Tibial artery (tissue), 4 donors: ENCODE measurements at regions of chr16 and their contacts with region 1.

Region 1: GRCh38 chr16:4944333-4945281 is 7.7 kb upstream of the PPL start:
- DNase-seq: peak; percentile 94 to 98
- H3K4me3 ChIP-seq: no peak overlapping the region
- H3K27ac ChIP-seq: peak overlapping the region; percentile 82 to 83
- H3K4me1 ChIP-seq: peaks cover 0 to 43% (median 39%) of the 10 kb centered on the region in 4 donors
- H3K27me3 ChIP-seq: no peaks in the 10 kb centered on the region
- CTCF ChIP-seq: no peak

Region 2: DNA sequence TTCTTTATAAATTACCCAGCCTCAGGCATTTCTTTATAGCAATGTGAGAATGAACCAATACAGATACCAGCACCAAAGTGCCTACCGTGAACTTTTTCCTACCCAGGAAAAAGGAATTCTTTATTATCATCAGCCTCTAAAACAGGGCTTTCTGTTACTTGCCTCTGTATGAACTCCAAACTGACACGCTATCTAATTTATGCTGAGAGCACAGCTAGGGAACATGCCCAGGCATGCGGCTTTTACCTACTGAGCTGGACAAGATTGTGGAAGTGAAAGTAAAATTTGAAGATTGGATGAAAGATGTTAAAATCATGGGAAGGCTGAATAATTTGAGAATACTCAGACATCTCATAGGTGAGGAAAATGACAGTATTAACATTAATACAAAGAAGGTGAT is 804.0 kb before region 1 on chr16:
- intact Hi-C with region 1: no loop called
- DNase-seq: no peak
- H3K4me3 ChIP-seq: no peak overlapping the region
- H3K27ac ChIP-seq: no peak overlapping the region
- H3K4me1 ChIP-seq: no peaks in the 10 kb centered on the region
- H3K27me3 ChIP-seq: no peaks in the 10 kb centered on the region
- CTCF ChIP-seq: no peak

Region 3: GRCh38 chr16:4624015-4624826 is 320.4 kb before region 1 on chr16 and contains the start of gene MGRN1:
- intact Hi-C with region 1: no loop called
- DNase-seq: peak; percentile 94 to 97
- H3K4me3 ChIP-seq: peak within 1 kb of the TSS; percentile 62 to 93
- H3K27ac ChIP-seq: peak within 1 kb of the TSS; percentile 83 to 90
- H3K4me1 ChIP-seq: peaks cover 0 to 34% (median 23%) of the 10 kb centered on the region in 4 donors
- H3K27me3 ChIP-seq: no peaks in the 10 kb centered on the region
- CTCF ChIP-seq: peak; percentile 81 to 83

Region 4: GRCh38 chr16:4746991-4747574 is 197.5 kb before region 1 on chr16:
- intact Hi-C with region 1: loop called (anchors 5 kb)
- DNase-seq: no peak
- H3K4me3 ChIP-seq: no peak overlapping the region
- H3K27ac ChIP-seq: no peak overlapping the region
- H3K4me1 ChIP-seq: peaks cover 0 to 15% (median 10%) of the 10 kb centered on the region in 4 donors
- H3K27me3 ChIP-seq: peaks cover 0 to 11% of the 10 kb centered on the region in 2 donors
- CTCF ChIP-seq: no peak

Region 5: DNA sequence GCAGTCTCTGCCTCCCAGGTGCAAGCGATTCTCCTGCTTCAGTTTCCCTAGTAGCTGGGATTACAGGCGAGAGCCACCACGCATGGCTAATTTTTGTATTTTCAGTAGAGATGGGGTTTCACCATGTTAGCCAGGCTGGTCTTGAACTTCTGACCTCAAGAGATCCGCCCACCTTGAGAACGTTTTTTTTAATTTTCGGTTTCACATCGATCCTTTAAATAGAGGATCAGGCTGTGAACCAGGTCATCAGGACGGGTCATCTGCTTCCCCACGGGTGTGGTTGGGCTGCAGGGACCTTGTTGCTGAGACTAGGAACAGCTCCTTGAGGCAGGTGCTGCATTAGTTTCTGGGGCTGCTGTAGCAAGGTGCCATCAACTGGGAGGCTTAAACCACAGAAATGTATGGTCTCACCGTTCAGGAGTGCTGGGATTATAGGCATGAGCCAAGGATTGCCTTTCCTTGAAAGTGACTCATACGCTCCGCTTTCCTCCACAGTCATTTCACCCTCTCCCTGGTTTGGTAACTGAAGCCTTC is 97.1 kb after region 1 on chr16:
- intact Hi-C with region 1: no loop called
- DNase-seq: no peak
- H3K4me3 ChIP-seq: no peak overlapping the region
- H3K27ac ChIP-seq: no peak overlapping the region
- H3K4me1 ChIP-seq: no peaks in the 10 kb centered on the region
- H3K27me3 ChIP-seq: no peaks in the 10 kb centered on the region
- CTCF ChIP-seq: no peak